PC-3 (cell line): ENCODE measurements at regions of chr1 and their contacts with region 1.

Region 1: GRCh38 chr1:68384321-68384813 is 65.4 kb downstream of the RPE65 start:
- DNase-seq: peak; percentile 98
- ATAC-seq: peak; percentile 76
- H3K4me3 ChIP-seq: peak overlapping the region; percentile 60
- H3K27ac ChIP-seq: peak overlapping the region; percentile 100
- H3K4me1 ChIP-seq: peaks cover 40% of the 10 kb centered on the region
- H3K27me3 ChIP-seq: no peaks in the 10 kb centered on the region
- CTCF ChIP-seq: peak; percentile 68

Region 2: DNA sequence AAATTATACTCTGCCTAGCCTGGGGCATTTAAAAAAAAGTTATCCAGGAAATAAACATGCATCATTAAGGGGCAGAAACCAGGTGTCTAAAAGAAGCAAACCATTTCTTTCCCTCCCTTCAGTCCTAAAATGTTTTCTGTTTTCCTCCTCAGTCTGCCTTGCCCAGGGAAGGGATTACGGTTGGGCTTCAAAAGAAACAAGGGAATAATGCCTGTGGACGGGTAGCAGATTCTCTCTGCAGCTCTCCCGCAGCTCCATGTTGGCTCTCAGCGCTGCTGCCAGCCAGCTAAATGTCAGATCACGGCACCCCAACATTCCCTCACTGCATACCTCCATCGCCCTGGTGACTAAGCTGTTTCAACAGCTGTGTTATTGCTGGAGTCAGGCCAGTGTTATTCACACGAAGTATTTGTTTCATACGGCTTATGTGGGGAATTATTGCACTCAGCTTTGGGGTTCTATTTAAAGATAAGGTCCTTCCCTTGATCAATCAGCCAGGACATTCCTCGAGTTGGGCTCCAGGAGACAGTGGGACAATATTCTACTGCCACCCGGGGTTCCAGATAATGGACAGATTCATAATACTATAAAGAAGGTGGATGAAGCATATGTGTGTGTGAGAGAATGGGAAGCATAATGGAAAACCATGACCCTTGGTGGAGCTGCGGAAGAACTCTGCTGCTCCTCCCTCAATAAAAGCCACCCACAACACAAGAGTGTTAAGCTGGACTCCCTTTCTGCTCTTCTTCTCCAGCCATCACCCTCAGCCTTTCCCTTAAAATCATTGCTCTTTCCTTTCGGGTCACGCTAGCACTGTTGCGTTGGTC is 210.2 kb before region 1 on chr1:
- CTCF ChIA-PET with region 1: no interaction called
- POLR2A ChIA-PET with region 1: no interaction called
- intact Hi-C with region 1: loop called (anchors 5 kb)
- DNase-seq: peak; percentile 85
- ATAC-seq: peak; percentile 50
- H3K4me3 ChIP-seq: peak overlapping the region; percentile 44
- H3K27ac ChIP-seq: 0 out of 2 replicates have a peak overlapping the region, but pooled peaks have one; percentile 13
- H3K4me1 ChIP-seq: peaks cover 57% of the 10 kb centered on the region
- H3K27me3 ChIP-seq: no peaks in the 10 kb centered on the region
- CTCF ChIP-seq: no peak

Region 3: GRCh38 chr1:68197891-68198290 is 186.5 kb before region 1 on chr1:
- CTCF ChIA-PET with region 1: no interaction called
- POLR2A ChIA-PET with region 1: interaction called, 4 read pairs
- intact Hi-C with region 1: loop called (anchors 2 kb)
- DNase-seq: peak; percentile 94
- ATAC-seq: peak; percentile 96
- H3K4me3 ChIP-seq: peak overlapping the region; percentile 19; the same call in 1 of the 2 replicates
- H3K27ac ChIP-seq: peak overlapping the region; percentile 93
- H3K4me1 ChIP-seq: peaks cover 47% of the 10 kb centered on the region
- H3K27me3 ChIP-seq: no peaks in the 10 kb centered on the region
- CTCF ChIP-seq: no peak

Region 4: DNA sequence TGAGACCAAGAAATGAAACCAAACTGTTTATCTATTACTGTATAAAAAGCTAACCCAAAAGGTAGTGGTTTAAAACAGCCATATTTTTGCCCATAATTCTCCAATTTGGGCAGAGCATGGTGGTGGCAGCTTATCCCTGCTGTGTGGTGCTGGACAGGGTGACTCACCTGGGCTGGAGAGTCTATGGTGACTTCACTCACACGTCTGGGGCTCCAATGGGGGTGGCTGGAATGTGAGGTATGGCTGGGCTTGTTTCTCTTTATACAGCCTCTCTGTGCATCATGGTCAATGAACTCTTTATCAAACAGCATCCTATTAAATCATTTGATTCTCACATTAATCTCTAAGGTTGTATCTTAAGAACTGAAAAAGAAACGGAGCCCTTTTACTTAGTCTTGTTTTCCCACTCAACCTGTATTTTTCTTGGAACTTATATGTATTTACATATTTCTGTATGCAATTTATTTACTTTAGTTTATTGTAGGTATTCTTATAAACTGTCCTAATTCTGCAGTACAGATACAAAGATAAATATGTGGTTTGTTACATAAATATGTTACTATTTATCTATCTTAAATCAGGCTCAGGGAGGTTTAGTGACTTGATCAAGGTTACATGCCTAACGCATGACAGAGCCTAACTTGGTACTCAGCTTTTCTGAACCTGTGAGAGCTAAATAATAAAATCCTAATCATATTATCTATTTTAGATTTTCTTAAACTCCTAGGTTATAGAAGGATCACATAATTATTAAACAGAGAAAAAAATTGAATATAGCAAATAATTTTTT is 114.5 kb before region 1 on chr1:
- CTCF ChIA-PET with region 1: no interaction called
- POLR2A ChIA-PET with region 1: no interaction called
- intact Hi-C with region 1: no loop called
- DNase-seq: peak; percentile 81
- ATAC-seq: peak; percentile 99
- H3K4me3 ChIP-seq: peak overlapping the region; percentile 9; the same call in 1 of the 2 replicates
- H3K27ac ChIP-seq: peak overlapping the region; percentile 45
- H3K4me1 ChIP-seq: peaks cover 22% of the 10 kb centered on the region
- H3K27me3 ChIP-seq: no peaks in the 10 kb centered on the region
- CTCF ChIP-seq: no peak

Region 5: DNA sequence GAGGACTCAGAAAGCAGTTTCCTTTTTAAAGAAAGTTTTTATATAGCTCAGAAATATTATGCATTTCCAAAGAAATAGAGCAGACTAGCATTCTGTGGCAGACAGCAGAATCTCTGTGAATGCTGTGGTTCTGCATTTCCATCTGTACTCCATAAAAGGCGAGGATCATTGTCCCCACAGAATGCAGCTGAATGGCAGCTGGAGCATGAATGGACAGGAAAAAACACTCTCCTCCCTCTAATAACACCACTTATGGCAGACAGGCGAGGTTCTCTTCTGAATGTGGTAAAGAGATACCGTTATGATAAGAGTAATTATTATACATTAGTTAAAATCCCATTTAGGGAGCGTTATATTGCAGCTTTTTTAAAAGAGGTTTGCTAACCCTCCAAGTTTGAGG is 70.6 kb before region 1 on chr1:
- CTCF ChIA-PET with region 1: no interaction called
- POLR2A ChIA-PET with region 1: no interaction called
- intact Hi-C with region 1: no loop called
- DNase-seq: no peak
- ATAC-seq: no peak
- H3K4me3 ChIP-seq: no peak overlapping the region
- H3K27ac ChIP-seq: no peak overlapping the region
- H3K4me1 ChIP-seq: peaks cover 10% of the 10 kb centered on the region
- H3K27me3 ChIP-seq: no peaks in the 10 kb centered on the region
- CTCF ChIP-seq: no peak

Region 6: DNA sequence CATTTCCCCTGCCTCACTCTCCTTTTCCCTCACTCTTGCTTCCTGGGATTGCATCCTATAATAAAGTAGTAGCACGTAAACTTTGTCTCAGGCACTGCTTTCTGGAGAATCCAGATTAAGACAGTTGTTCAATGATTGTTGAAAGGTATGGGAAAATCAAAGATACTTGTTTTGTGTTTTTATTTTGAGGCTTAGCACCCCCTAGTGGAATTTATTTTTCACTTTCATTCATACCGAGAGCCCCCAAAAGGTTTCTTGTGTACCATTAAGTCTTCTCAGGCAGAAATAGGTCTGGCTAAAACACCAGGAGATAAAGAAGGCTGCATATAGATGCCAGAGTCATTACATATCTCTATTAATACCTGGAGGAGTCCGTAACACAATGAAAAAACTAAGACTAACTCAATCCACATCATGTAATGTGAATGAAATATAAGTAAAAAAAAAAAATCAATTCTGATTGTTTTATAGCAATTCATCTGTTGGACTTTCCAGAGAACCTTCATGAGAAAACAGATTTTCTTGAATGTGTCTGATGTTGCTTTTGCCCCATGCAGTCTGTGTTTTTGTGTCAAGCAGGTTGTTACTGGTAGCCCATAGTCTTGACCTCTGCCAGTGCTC is 38.1 kb before region 1 on chr1:
- CTCF ChIA-PET with region 1: interaction called, 3 read pairs
- POLR2A ChIA-PET with region 1: no interaction called
- intact Hi-C with region 1: loop called (anchors 2 kb)
- DNase-seq: peak; percentile 58
- ATAC-seq: 0 out of 2 replicates have a peak, but pooled peaks have one; percentile 22
- H3K4me3 ChIP-seq: no peak overlapping the region
- H3K27ac ChIP-seq: no peak overlapping the region
- H3K4me1 ChIP-seq: no peaks in the 10 kb centered on the region
- H3K27me3 ChIP-seq: 0 out of 2 replicates have a peak, but pooled peaks cover 4% of the 10 kb centered on the region
- CTCF ChIP-seq: peak; percentile 80

Region 7: DNA sequence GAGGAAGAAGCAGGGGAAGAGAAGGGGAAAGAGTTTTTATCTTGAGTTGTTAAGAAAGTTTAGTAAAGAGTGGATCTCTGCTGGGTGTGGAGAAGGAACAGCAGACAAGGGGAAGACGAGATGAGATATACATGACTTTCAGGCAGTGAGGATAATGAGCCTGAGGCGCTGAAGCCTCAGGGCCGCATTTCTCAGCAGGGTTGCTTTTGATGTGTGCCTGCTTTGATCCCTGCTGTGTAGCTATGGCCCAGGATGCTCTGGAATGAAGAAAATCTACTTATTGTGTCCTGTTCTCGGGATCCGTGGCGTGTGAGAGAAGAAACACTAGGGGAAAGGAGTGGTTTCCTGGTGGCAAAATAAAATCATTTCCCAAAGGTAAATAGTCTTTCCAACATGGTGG is 80.5 kb after region 1 on chr1:
- CTCF ChIA-PET with region 1: no interaction called
- POLR2A ChIA-PET with region 1: no interaction called
- intact Hi-C with region 1: no loop called
- DNase-seq: no peak
- ATAC-seq: no peak
- H3K4me3 ChIP-seq: no peak overlapping the region
- H3K27ac ChIP-seq: no peak overlapping the region
- H3K4me1 ChIP-seq: no peaks in the 10 kb centered on the region
- H3K27me3 ChIP-seq: no peaks in the 10 kb centered on the region
- CTCF ChIP-seq: no peak